Vagina (tissue), 2 donors: ENCODE measurements at regions of chr18 and their contacts with region 1.

Region 1: DNA sequence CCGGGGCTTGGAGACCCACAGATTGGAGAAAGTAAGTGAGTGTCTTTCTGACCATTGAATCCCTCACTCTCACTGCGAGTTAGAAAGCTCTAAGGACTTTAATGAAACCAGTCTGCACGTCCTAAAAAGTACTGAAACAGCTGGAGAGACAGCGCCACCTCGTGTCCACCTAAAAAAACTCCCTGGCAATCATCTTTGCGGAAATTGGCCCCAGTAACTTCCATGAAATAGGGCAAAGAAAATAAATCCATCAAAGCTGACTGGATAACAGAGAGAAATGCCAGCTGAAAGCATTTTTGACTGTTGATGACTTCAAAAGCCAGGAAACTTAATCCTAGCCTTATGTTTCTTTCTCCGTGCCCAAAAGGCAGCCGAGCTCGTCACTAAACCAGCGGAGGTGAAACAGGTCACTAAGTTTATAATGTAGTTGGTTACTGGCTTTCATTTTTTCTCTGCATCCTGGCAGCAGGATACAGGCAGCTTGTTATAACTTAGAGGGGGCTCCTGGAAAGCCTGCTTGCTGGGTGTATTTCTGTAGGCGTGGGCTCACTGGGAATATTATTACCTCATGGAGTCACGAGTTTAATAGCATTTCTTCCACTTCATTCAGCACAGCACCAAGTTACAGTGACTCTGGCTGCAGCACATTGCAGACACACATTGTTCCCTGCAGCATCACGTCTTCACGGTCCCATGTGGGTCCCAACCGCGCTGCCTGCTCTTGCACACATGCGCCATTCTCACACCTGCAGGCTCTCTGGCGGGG is 266.5 kb downstream of the HRH4 start:
- DNase-seq: no peak
- H3K4me3 ChIP-seq: peak overlapping the region; percentile 18 to 33
- H3K27ac ChIP-seq: peak overlapping the region; percentile 49
- H3K4me1 ChIP-seq: peaks cover 10% of the 10 kb centered on the region
- H3K27me3 ChIP-seq: no peaks in the 10 kb centered on the region
- CTCF ChIP-seq: peak; percentile 37 to 88 (median 76)
- POLR2A ChIP-seq: no peak

Region 2: GRCh38 chr18:24595561-24596031 is 131.3 kb before region 1 on chr18:
- intact Hi-C with region 1: loop called (anchors 10 kb)
- DNase-seq: peak in 1 of 2 donors; percentile 81
- H3K4me3 ChIP-seq: no peak overlapping the region
- H3K27ac ChIP-seq: no peak overlapping the region
- H3K4me1 ChIP-seq: no peaks in the 10 kb centered on the region
- H3K27me3 ChIP-seq: no peaks in the 10 kb centered on the region
- CTCF ChIP-seq: no peak
- POLR2A ChIP-seq: no peak

Region 3: DNA sequence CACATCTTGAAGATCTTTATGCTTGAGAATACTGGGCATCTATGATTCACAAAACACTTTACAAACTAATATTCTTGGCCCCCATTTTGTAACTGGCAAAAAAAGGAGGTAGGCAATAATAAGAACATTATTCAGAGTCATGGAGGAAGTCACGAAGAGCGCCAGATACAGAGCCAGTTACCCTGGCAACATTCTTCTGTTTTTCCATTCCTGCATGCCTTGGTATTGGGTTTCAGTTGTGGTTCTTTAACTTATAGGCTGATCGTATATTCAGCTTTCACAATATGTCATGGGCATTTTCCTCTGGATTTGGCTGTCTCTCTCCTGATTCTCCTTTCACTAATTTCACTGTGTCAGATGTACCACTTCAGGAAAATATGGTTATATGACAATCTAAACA is 31.7 kb before region 1 on chr18:
- intact Hi-C with region 1: no loop called
- DNase-seq: no peak
- H3K4me3 ChIP-seq: no peak overlapping the region
- H3K27ac ChIP-seq: no peak overlapping the region
- H3K4me1 ChIP-seq: no peaks in the 10 kb centered on the region
- H3K27me3 ChIP-seq: no peaks in the 10 kb centered on the region
- CTCF ChIP-seq: no peak
- POLR2A ChIP-seq: no peak